Mucosa of descending colon (tissue), 3 donors: ENCODE measurements at regions of chr6 and their contacts with region 1.

Region 1: GRCh38 chr6:50128420-50129005 is 78.8 kb upstream of the DEFB112 start:
- DNase-seq: no peak
- ATAC-seq: no peak
- H3K4me3 ChIP-seq: no peak overlapping the region
- H3K4me1 ChIP-seq: no peaks in the 10 kb centered on the region
- CTCF ChIP-seq: no peak

Region 2: DNA sequence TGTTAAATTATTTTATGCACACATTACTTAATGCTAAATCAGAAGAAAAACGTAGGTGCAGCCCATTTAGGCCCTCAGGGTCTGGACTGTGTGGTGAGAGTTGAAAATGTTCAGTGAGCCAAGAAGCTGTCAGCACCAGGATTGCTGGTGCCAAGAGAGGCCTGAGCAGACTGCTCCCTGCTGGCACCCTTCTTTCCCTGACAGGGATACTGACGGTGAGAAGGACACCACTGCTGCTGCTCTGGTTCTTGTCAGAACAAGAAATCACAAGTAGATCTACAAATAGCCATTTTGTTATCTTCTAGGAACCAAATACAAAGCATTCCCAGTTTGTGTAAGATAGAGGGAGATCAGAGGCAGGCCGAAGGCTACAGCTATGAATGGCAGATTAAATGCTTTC is 213.5 kb before region 1 on chr6:
- intact Hi-C with region 1: no loop called
- DNase-seq: no peak
- ATAC-seq: no peak
- H3K4me3 ChIP-seq: no peak overlapping the region
- H3K4me1 ChIP-seq: no peaks in the 10 kb centered on the region
- CTCF ChIP-seq: no peak

Region 3: DNA sequence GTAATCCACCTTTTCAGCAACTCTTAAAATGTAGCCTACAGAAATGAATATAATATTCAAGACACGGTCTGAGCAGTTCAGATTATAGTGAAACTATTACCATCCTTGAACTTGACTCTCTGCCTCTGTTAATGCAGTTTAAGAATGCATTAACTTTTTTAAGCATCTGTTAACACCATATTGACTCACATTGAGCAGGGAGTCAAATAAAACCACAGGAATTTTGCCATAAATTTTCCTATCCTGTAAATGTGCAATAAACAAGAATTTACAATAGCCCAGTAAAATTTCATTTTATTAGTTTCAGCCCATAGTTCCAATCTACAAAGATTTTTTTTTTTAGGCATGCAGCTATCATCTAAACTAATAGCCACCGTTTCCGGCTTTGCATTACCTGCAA is 160.4 kb after region 1 on chr6:
- intact Hi-C with region 1: no loop called
- DNase-seq: no peak
- ATAC-seq: no peak
- H3K4me3 ChIP-seq: no peak overlapping the region
- H3K4me1 ChIP-seq: no peaks in the 10 kb centered on the region
- CTCF ChIP-seq: no peak

Region 4: GRCh38 chr6:50602292-50602691 is 473.8 kb after region 1 on chr6:
- intact Hi-C with region 1: loop called (anchors 10 kb)
- DNase-seq: peak in 1 of 3 donors; percentile 14
- ATAC-seq: no peak
- H3K4me3 ChIP-seq: no peak overlapping the region
- H3K4me1 ChIP-seq: no peaks in the 10 kb centered on the region
- CTCF ChIP-seq: peak; percentile 39